ENCODE measurements at regions of chr15 and their contacts with region 1.

Region 1: DNA sequence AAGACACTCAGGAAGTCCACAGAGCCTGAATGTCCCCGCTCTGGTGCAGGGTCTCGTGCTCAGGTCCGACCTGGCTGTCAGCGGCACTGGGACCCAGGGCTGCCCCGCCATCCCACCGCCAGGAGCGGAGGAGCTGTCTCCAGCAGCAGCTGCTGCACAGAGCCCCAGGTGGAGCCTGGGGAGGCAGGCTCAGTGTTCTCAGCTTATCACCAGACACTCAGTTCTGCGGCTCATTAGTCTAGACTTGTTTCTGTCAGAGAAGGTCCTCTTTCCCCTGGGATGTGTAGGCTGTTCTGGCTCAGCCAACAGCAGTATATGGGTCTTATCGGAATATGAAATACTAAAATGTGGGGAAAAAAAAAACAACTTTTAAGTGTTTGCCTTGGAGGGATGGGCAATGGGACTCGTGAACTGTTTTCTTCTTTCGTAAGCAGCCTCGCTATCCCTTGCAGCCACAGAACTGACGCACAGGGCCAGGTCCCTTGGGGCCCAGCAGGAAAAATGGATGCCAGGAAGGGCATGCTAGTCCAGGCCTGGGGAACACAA is 75.9 kb downstream of the KLF13 start:
- DNase-seq: peak; percentile 75 to 76
- ATAC-seq: peak; percentile 62 to 86 (median 78)
- H3K4me3 ChIP-seq: no peak overlapping the region
- H3K27ac ChIP-seq: peak overlapping the region; percentile 24 to 73 (median 66)
- H3K4me1 ChIP-seq: peaks cover 12 to 58% (median 26%) of the 10 kb centered on the region in 9 donors
- H3K27me3 ChIP-seq: no peaks in the 10 kb centered on the region
- CTCF ChIP-seq: no peak

Region 2: DNA sequence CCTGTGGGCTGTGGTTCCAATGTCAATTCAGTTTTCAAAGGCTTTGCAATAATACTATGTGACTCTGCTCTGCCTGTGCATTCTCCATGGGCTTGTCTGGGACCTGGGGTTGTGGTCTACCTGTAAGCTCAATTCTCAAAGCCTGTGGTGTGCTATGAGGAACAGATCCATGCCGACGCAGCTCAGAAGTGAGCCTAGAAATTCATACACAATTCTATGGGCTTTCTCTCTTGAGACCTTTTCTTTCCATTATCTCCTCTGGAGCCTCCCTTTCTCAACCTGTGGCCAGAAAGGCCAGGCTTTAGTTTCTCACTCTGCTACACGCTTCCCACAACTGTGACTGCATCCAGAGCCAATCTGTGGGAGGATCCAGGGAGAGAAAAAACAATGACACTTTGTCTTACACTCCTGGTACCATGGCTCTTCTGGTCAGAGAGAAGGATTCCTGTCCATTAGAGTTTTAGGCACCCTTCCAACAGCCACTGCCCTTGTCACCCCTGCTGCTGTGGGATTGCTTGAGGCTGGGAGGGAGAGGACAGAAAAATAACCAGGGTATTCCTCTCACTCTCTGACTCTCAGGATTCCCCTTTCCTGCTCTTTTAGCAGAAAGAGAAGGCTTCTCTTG is 110.1 kb before region 1 on chr15:
- intact Hi-C with region 1: no loop called
- DNase-seq: peak in 1 of 2 donors; percentile 6
- ATAC-seq: peak in 3 of 8 donors; percentile 11 to 39 (median 22)
- H3K4me3 ChIP-seq: no peak overlapping the region
- H3K27ac ChIP-seq: no peak overlapping the region
- H3K4me1 ChIP-seq: peaks cover 0 to 28% (median 9%) of the 10 kb centered on the region in 9 donors
- H3K27me3 ChIP-seq: no peaks in the 10 kb centered on the region
- CTCF ChIP-seq: no peak

Region 3: GRCh38 chr15:31458591-31459399 is 56.2 kb after region 1 on chr15:
- intact Hi-C with region 1: no loop called
- DNase-seq: no peak
- ATAC-seq: no peak
- H3K4me3 ChIP-seq: no peak overlapping the region
- H3K27ac ChIP-seq: no peak overlapping the region
- H3K4me1 ChIP-seq: peaks cover 0 to 4% (median 0%) of the 10 kb centered on the region in 9 donors
- H3K27me3 ChIP-seq: no peaks in the 10 kb centered on the region
- CTCF ChIP-seq: no peak

Region 4: GRCh38 chr15:31472636-31473384 is 70.2 kb after region 1 on chr15:
- intact Hi-C with region 1: loop called in 1 of 10 experiments (anchors 5 kb)
- DNase-seq: peak in 1 of 2 donors; percentile 36
- ATAC-seq: peak in 7 of 8 donors; percentile 64 to 83 (median 77)
- H3K4me3 ChIP-seq: peak overlapping the region in 1 of 10 donors; percentile 30
- H3K27ac ChIP-seq: peak overlapping the region in 5 of 10 donors; percentile 10 to 74 (median 20)
- H3K4me1 ChIP-seq: peaks cover 0 to 26% (median 16%) of the 10 kb centered on the region in 9 donors
- H3K27me3 ChIP-seq: peaks cover 0 to 3% (median 0%) of the 10 kb centered on the region in 7 donors
- CTCF ChIP-seq: no peak

Measured in heart right ventricle (tissue), 16 donors.